CD4-positive, alpha-beta T cell (primary cell): ENCODE measurements at regions of chr20 and their contacts with region 1.

Region 1: GRCh38 chr20:9978397-9979004 is 56.3 kb upstream of the ANKEF1 start:
- DNase-seq: peak in 9 of 14 experiments; percentile 4 to 80 (median 23)
- ATAC-seq: peak; percentile 87
- H3K4me3 ChIP-seq: no peak overlapping the region
- H3K4me3 Mint-ChIP-seq: no peak overlapping the region
- H3K27ac ChIP-seq: no peak overlapping the region
- H3K27ac Mint-ChIP-seq: no peak overlapping the region
- H3K4me1 ChIP-seq: no peaks in the 10 kb centered on the region
- H3K4me1 Mint-ChIP-seq: no peaks in the 10 kb centered on the region
- H3K27me3 ChIP-seq: no peaks in the 10 kb centered on the region
- H3K27me3 Mint-ChIP-seq: peaks cover 3% of the 10 kb centered on the region
- CTCF ChIP-seq: peak; percentile 76

Region 2: GRCh38 chr20:9945408-9945807 is 33.1 kb before region 1 on chr20:
- CTCF ChIA-PET with region 1: no interaction called
- POLR2A ChIA-PET with region 1: no interaction called
- intact Hi-C with region 1: no loop called
- DNase-seq: no peak
- ATAC-seq: no peak
- H3K4me3 ChIP-seq: no peak overlapping the region
- H3K4me3 Mint-ChIP-seq: no peak overlapping the region
- H3K27ac ChIP-seq: no peak overlapping the region
- H3K27ac Mint-ChIP-seq: no peak overlapping the region
- H3K4me1 ChIP-seq: no peaks in the 10 kb centered on the region
- H3K4me1 Mint-ChIP-seq: no peaks in the 10 kb centered on the region
- H3K27me3 ChIP-seq: peaks cover 0 to 3% of the 10 kb centered on the region in 2 experiments
- H3K27me3 Mint-ChIP-seq: peaks cover 13% of the 10 kb centered on the region
- CTCF ChIP-seq: no peak

Region 3: GRCh38 chr20:10090588-10091166 is 112.2 kb after region 1 on chr20:
- CTCF ChIA-PET with region 1: interaction called, 24 read pairs
- POLR2A ChIA-PET with region 1: interaction called, 3 read pairs
- intact Hi-C with region 1: loop called (anchors 1 kb)
- DNase-seq: peak in 7 of 14 experiments; percentile 1 to 62 (median 33)
- ATAC-seq: peak; percentile 51
- H3K4me3 ChIP-seq: no peak overlapping the region
- H3K4me3 Mint-ChIP-seq: no peak overlapping the region
- H3K27ac ChIP-seq: no peak overlapping the region
- H3K27ac Mint-ChIP-seq: no peak overlapping the region
- H3K4me1 ChIP-seq: no peaks in the 10 kb centered on the region
- H3K4me1 Mint-ChIP-seq: no peaks in the 10 kb centered on the region
- H3K27me3 ChIP-seq: no peaks in the 10 kb centered on the region
- H3K27me3 Mint-ChIP-seq: peaks cover 8% of the 10 kb centered on the region
- CTCF ChIP-seq: peak; percentile 74

Region 4: DNA sequence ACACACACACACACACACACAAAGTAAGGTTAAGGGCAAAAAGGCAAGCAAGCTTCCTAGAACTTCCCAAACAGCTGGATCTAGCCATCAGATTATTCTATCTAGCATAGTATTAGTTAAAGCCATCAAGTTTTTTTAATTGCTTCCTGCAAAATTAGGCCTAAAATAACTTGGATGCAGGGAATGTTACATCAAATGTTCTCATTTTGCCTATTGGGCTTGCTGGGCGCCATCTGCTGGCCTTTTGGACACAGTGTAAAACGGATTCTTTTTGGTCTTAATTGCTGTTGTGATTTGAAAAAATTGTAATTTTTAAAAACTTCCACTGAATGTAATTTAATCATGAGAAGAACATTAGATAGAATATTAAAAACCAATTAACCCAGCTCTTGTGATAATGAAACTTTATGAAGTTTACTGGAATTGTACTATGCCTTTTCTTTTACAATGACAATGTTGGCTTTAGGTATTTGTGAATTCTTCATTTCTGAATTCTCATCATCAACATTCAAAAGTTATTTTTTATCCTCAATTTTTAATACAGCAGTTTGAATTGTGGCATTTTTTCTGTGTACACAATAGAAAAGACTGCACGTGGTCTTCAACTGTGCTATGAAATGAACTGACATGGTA is 448.7 kb after region 1 on chr20:
- CTCF ChIA-PET with region 1: interaction called, 4 read pairs
- POLR2A ChIA-PET with region 1: no interaction called
- intact Hi-C with region 1: loop called (anchors 1 kb)
- DNase-seq: peak in 13 of 14 experiments; percentile 13 to 70 (median 35)
- ATAC-seq: no peak
- H3K4me3 ChIP-seq: no peak overlapping the region
- H3K4me3 Mint-ChIP-seq: no peak overlapping the region
- H3K27ac ChIP-seq: no peak overlapping the region
- H3K27ac Mint-ChIP-seq: no peak overlapping the region
- H3K4me1 ChIP-seq: no peaks in the 10 kb centered on the region
- H3K4me1 Mint-ChIP-seq: peaks cover 56% of the 10 kb centered on the region
- H3K27me3 ChIP-seq: no peaks in the 10 kb centered on the region
- H3K27me3 Mint-ChIP-seq: no peaks in the 10 kb centered on the region
- CTCF ChIP-seq: peak; percentile 88

Region 5: GRCh38 chr20:10536531-10536930 is 558.0 kb after region 1 on chr20:
- CTCF ChIA-PET with region 1: no interaction called
- POLR2A ChIA-PET with region 1: no interaction called
- intact Hi-C with region 1: loop called (anchors 2 to 5 kb)
- DNase-seq: peak in 8 of 14 experiments; percentile 4 to 39 (median 20)
- ATAC-seq: no peak
- H3K4me3 ChIP-seq: no peak overlapping the region
- H3K4me3 Mint-ChIP-seq: no peak overlapping the region
- H3K27ac ChIP-seq: no peak overlapping the region
- H3K27ac Mint-ChIP-seq: no peak overlapping the region
- H3K4me1 ChIP-seq: no peaks in the 10 kb centered on the region
- H3K4me1 Mint-ChIP-seq: peaks cover 24% of the 10 kb centered on the region
- H3K27me3 ChIP-seq: no peaks in the 10 kb centered on the region
- H3K27me3 Mint-ChIP-seq: no peaks in the 10 kb centered on the region
- CTCF ChIP-seq: peak; percentile 24

Region 6: GRCh38 chr20:11544029-11544678 is 1565.7 kb after region 1 on chr20:
- CTCF ChIA-PET with region 1: no interaction called
- POLR2A ChIA-PET with region 1: no interaction called
- intact Hi-C with region 1: loop called (anchors 5 kb)
- DNase-seq: peak in 3 of 14 experiments; percentile 15 to 24 (median 19)
- ATAC-seq: no peak
- H3K4me3 ChIP-seq: no peak overlapping the region
- H3K4me3 Mint-ChIP-seq: no peak overlapping the region
- H3K27ac ChIP-seq: no peak overlapping the region
- H3K27ac Mint-ChIP-seq: no peak overlapping the region
- H3K4me1 ChIP-seq: no peaks in the 10 kb centered on the region
- H3K4me1 Mint-ChIP-seq: no peaks in the 10 kb centered on the region
- H3K27me3 ChIP-seq: no peaks in the 10 kb centered on the region
- H3K27me3 Mint-ChIP-seq: no peaks in the 10 kb centered on the region
- CTCF ChIP-seq: no peak